Activated CD4-positive, alpha-beta memory T cell treated with anti-CD3 and anti-CD28 coated beads for 36 hours (primary cell): ENCODE measurements at regions of chr11 and their contacts with region 1.

Region 1: DNA sequence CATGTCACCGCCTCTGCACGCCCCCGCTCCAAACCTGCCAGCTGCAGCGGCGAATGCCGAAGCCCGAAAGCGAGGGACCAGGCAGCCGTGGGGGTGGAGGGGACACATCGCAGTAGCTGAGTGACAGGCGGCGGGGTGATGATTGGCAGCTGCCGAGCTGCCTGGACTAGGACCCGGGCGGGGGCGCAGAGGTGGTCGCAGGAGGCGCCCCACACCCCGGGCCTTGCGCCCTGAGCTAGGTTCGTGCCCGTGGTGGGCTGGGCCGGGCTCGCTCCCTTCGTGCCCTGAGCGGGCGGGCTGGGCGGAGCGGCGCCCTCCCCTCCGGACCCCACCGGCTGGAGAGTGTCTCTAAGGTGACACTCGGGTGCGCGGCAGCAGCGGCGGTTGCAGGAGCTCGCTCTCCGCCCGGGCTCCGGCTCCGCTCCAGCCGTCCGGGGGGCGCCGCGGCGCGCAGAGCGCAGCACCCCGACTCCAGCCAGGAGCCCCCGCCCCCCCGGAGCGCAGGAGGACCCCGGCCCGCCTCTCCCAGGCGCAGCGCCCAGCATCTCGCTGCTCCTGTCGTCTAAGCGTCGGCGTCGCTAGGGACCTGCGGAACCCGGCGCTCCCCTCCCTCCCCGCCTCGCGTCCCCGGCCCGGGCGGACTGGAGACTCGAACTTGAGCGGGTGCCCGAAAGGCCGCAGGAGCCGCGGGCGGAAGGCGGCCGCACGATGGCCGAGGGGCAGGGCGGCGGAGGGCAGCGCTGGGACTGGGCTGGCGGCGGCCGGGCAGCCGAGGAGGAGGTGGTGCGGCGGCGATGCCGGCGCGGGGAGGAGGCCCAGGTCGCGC is 14.5 kb upstream of the DGKZ start:
- DNase-seq: peak; percentile 64
- H3K4me3 Mint-ChIP-seq: peak overlapping the region; percentile 73
- H3K27ac Mint-ChIP-seq: peak overlapping the region; percentile 8
- H3K4me1 Mint-ChIP-seq: peaks cover 67% of the 10 kb centered on the region
- H3K27me3 Mint-ChIP-seq: no peaks in the 10 kb centered on the region

Region 2: GRCh38 chr11:46315033-46315738 is 17.6 kb before region 1 on chr11:
- CTCF ChIA-PET with region 1: interaction called, 36 read pairs
- POLR2A ChIA-PET with region 1: interaction called, 5 read pairs
- intact Hi-C with region 1: no loop called
- DNase-seq: peak; percentile 83
- H3K4me3 Mint-ChIP-seq: no peak overlapping the region
- H3K27ac Mint-ChIP-seq: peak overlapping the region; percentile 10
- H3K4me1 Mint-ChIP-seq: peaks cover 19% of the 10 kb centered on the region
- H3K27me3 Mint-ChIP-seq: no peaks in the 10 kb centered on the region